Head of caudate nucleus (tissue), 42 donors: ENCODE measurements at regions of chr14 and their contacts with region 1.

Region 1: DNA sequence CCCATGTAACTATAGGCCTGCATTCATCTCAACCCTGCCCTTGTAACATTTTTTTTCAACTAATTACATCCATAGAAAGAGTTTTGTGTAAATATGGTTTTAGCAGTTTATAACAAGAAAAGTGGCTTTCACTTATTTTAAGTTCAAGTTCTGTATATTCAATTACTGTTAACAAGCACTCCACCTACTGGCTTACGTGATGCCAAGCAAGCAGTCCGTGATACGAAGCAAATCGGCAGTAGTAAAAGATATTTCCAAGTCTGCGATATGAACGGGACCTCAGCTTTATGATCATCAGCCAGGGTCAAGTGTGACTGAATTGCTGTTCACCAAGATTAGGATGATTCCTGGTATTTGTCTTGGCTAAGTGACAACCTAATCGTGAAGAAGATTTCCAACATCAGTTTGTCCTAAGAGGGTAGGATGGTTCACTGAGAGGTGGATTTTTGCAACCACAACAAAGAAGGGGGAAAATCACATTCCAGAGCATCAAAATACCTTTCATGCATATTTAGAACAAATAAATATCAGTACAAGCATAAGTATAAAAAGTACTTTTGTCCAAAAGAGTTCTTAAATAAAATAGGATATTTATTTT is 456.2 kb downstream of the FOXG1 start:
- DNase-seq: peak in 34 of 42 donors; percentile 6 to 71 (median 35)

Region 2: GRCh38 chr14:28773861-28774691 is 448.7 kb before region 1 on chr14:
- intact Hi-C with region 1: loop called (anchors 5 kb)
- DNase-seq: peak in 41 of 42 donors; percentile 63 to 94 (median 83)

Region 3: DNA sequence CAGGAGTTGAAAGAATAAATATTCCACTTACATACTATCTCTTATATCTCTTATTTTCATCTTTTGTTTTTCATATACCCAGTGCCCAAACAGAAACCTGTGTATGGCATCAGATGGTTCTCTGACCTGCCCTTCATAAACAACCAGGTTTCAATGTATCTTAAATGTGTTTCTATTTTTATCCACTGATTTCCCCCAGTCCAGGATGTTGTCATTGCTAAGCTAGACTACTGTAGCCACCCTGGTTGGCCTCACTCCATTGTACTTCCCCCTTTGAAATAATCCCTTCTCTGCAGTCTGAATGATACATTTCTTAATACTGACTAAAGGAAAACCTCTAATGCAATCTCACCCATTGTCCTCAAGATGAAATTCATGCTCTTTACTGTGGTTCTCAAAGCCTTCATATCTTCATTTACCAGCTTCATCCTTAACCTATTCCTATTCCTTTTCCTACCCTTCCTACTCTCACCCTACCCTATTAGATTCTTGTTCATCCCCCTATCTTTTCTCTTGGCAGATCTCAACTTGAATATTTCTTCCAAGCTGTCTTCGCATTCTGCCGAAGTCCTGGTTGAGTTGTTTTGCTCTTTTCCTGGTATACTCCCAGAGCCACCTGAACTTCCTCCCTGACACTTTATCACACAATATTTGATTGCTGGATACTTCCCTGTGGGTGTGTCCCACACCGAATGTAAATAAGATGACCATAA is 143.8 kb before region 1 on chr14:
- intact Hi-C with region 1: no loop called
- DNase-seq: no peak

Region 4: DNA sequence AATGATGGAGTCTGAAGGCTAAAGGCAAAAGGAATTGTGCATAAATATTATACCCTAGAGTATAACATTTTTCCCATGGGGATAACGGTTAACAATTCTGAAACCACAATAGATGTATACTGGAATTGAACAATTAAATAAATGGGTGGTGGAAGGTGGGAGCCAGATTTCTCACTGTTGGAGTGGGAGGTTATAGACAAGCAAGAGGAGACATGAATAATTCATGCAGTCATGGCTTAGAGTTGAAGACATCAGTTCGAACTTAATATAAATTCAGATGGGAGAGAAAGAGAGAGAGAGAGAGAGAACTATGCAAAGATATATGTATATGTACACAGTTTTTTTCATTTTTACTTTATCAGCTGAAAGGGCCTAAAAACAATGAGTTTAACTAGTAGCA is 67.7 kb after region 1 on chr14:
- intact Hi-C with region 1: no loop called
- DNase-seq: peak in 7 of 42 donors; percentile 9 to 47 (median 16)